AG04449 (cell line): ENCODE measurements at regions of chr1 and their contacts with region 1.

Region 1: DNA sequence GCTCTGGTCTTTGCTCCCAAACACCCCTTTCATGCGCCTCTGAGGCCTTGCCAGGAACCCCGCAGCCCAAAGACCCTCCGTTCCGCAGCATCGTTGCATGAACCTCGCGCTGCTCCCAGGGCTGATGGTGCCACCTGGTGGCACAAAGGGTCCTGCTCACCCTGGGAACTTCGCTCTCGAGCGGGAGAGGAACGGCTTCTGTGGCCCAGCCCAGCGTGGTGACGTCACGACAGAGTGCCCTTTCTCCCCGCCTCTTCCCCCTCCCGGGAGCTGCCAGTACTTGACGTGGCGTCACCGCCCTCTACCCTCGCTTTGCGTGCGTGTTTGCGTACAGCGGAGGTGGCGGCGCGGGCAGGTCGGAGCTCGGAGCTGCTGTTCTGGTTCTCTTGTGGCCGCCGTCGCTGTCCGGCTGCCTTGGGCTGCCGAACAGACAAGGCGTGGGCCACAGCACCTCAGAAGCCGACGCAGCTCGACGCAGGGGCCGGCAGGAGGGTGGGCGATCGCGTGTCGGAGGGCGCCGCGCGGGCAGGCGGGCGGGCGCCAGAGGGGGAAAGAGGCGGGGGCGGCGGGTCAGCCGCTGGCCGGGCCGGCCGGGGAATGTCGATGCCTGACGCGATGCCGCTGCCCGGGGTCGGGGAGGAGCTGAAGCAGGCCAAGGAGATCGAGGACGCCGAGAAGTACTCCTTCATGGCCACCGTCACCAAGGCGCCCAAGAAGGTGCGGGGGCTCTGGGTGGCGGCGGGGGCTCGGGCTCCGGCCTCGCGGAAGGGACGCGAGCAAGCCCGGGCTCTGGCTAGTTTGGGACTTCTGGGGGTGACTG is at the start of gene AHCYL1:
- DNase-seq: peak; percentile 87
- H3K4me3 ChIP-seq: peak within 1 kb of the TSS; percentile 82
- CTCF ChIP-seq: peak; percentile 97

Region 2: GRCh38 chr1:109643385-109644230 is 341.1 kb before region 1 on chr1:
- CTCF ChIA-PET with region 1: interaction called, 63 read pairs
- POLR2A ChIA-PET with region 1: interaction called, 7 read pairs
- DNase-seq: no peak
- H3K4me3 ChIP-seq: no peak overlapping the region
- CTCF ChIP-seq: peak; percentile 94

Region 3: DNA sequence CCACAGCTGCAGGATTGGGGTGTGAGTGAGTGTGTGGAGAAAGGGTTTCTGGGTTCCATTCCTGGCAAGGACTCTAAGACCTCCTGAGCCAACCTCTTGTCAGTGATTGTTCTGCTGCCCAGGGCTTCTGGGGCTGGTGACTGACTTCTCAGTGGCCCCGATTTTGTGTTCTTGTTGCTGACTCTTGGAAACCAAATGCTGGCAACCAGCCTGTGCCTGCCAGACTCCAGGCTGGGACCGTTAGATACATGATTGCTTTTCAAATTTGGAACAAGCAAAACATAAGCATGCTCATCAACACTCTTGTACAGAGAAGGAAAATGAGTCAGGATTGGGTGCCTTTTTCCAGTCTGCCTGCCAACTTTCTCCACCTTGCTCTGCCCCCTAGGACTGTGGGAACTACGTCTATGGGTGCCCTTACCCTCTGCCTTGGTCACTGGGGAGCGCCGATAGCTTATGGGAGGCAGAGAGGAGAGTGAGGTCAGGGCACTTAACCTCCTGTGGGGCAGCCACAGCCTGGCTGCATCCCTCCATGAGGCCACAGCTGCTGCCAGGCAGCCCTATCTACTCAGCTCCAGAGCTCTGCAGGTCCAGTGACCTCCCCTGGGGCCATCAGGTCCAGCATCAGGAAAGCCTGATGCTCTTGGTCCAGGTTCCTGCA is 181.6 kb before region 1 on chr1:
- CTCF ChIA-PET with region 1: interaction called, 21 read pairs
- POLR2A ChIA-PET with region 1: interaction called, 4 read pairs
- DNase-seq: no peak
- H3K4me3 ChIP-seq: no peak overlapping the region
- CTCF ChIP-seq: no peak

Region 4: GRCh38 chr1:109877320-109877771 is 107.3 kb before region 1 on chr1:
- CTCF ChIA-PET with region 1: interaction called, 15 read pairs
- POLR2A ChIA-PET with region 1: interaction called, 6 read pairs
- DNase-seq: peak; percentile 83
- H3K4me3 ChIP-seq: peak overlapping the region; percentile 20
- CTCF ChIP-seq: peak; percentile 47

Region 5: DNA sequence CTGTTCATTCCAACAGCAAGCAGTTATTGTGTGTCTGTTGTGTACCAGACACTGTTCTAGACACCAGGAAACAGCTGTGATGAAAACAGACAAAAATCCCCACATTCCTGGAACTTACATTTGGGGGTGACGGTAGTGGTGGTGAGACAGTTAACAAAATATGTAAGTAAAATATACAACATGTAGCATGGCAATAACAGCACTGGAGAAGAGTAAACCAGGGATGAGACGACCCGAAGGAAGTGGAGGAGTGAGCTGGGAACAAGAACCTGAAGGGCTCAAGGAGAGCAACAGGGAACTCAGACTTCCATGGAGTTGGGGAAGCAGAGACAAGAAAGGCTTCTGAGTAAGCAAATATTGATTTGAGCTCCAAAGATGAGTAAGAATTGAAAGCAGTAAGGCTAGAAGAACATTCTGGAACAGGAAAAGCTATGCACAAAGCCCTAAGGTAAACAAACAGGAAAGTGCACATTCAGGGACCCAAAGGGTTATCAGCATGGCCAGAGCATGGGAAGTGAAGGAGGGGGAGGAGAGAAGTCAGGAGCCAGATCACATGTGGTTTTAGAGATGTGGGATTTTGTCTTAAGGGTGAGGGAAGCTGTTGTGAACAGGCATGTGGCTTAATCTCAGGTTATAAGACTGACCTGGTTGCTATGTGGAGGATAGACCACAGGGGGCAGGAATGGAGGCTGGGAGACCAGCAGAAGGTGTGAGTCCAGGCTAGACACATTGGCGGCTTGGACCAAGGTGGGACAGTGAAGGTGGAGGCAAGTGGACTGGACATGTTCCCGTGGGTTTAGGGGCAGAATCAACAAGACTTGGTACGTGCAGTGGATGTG is 66.7 kb before region 1 on chr1:
- CTCF ChIA-PET with region 1: interaction called, 42 read pairs
- POLR2A ChIA-PET with region 1: interaction called, 3 read pairs
- DNase-seq: no peak
- H3K4me3 ChIP-seq: no peak overlapping the region
- CTCF ChIP-seq: no peak

Region 6: DNA sequence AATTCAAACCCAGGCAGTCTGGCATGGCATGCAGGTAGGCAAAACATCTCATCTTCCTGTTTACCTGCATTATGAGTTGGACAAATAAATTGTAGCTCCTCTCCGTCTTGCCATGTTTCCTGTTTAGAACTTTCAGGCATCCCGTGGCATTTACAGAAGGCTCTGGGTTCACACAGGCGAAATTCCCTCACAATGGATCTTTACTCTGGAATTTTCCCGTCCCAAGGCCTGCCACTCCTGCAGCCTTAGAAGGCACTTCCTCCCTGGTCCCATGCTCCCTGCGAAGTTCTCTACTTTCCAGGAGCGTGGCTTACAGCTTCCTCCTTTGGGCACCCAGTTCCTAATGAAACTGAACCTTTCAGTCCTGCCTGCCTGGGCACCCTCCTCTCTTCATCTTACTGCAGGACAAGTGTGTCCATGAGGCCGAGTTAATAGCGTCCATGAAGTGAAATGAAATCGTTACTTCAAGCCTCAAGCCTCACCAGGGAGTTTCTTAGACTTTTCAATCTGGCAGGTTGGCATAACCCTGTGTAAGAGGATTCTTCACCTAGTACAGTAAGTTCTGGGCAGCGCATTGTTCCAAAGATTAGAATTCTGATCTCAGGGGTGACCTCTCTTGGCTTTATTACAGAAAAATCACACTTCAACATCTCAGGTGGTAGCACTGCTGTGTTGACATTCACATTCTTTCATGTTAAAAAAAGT is 36.9 kb before region 1 on chr1:
- CTCF ChIA-PET with region 1: interaction called, 11 read pairs
- POLR2A ChIA-PET with region 1: no interaction called
- DNase-seq: no peak
- H3K4me3 ChIP-seq: no peak overlapping the region
- CTCF ChIP-seq: no peak

Region 7: GRCh38 chr1:110003747-110004630 is 19.3 kb after region 1 on chr1:
- CTCF ChIA-PET with region 1: interaction called, 32 read pairs
- POLR2A ChIA-PET with region 1: interaction called, 7 read pairs
- DNase-seq: peak; percentile 93
- H3K4me3 ChIP-seq: peak overlapping the region; percentile 48
- CTCF ChIP-seq: no peak